AG04449 (cell line): ENCODE measurements at regions of chr10 and their contacts with region 1.

Region 1: DNA sequence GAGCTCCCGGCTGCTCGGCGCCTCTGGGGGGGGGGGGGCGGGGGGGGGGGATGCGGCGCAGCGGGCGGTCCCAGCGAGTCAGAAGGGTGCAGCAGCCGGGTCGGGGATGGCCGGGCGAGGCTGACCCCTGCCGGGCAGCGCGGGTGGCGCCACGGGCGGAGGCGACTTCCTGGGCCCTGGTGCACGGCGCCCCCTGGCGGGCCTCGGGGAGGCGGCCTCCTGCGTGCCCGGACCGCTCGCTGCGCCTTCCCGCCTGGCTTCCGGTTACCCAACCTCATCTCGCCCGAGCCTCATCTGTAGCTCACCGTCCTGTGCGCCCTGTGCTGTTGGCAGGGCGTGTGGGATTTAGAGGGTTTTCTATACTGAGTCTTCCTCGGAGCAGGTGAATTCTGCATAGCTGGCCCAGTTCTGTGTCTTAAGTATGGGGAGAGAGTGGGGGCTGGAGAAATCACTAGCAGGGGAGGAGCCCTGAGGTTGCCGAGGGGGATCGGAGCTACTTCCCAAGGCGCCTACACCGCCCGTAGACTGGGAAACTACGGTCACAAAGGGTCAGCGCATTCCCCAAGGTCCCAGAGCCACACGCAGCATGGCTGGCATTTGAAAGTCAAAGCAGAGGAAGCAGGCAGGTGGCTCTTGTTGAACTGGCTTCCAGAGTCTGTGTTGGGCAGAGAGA is 28.3 kb upstream of the WDFY4 start:
- DNase-seq: no peak
- H3K4me3 ChIP-seq: peak overlapping the region; percentile 62
- CTCF ChIP-seq: peak; percentile 100

Region 2: DNA sequence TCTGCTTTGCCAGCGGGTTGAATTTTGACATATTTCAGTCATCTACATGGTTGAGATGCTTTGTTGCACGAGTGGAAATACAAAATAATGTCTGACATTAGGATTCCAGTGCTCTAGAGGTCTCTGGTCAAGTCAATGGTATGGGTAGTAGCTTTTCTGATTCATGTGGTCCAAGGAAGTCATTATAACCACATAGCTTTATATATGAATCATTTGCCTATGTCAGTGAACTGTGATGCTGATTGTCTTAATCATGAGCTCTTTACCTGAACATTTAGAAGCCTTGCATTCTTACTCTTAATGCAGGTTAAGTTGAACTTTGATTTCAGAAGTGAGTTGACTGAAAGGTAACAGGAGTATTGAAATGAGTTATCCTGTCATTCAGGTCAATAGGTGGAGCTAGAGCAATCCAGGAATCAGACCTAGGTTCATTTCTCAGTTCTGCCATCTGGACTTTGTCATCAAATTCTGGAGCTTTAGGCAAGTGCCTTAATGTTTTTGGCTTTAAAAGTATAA is 346.6 kb before region 1 on chr10:
- CTCF ChIA-PET with region 1: interaction called, 14 read pairs
- POLR2A ChIA-PET with region 1: no interaction called
- DNase-seq: no peak
- H3K4me3 ChIP-seq: no peak overlapping the region
- CTCF ChIP-seq: no peak

Region 3: GRCh38 chr10:48414778-48415177 is 241.6 kb before region 1 on chr10:
- CTCF ChIA-PET with region 1: interaction called, 13 read pairs
- POLR2A ChIA-PET with region 1: no interaction called
- DNase-seq: no peak
- H3K4me3 ChIP-seq: no peak overlapping the region
- CTCF ChIP-seq: no peak

Region 4: DNA sequence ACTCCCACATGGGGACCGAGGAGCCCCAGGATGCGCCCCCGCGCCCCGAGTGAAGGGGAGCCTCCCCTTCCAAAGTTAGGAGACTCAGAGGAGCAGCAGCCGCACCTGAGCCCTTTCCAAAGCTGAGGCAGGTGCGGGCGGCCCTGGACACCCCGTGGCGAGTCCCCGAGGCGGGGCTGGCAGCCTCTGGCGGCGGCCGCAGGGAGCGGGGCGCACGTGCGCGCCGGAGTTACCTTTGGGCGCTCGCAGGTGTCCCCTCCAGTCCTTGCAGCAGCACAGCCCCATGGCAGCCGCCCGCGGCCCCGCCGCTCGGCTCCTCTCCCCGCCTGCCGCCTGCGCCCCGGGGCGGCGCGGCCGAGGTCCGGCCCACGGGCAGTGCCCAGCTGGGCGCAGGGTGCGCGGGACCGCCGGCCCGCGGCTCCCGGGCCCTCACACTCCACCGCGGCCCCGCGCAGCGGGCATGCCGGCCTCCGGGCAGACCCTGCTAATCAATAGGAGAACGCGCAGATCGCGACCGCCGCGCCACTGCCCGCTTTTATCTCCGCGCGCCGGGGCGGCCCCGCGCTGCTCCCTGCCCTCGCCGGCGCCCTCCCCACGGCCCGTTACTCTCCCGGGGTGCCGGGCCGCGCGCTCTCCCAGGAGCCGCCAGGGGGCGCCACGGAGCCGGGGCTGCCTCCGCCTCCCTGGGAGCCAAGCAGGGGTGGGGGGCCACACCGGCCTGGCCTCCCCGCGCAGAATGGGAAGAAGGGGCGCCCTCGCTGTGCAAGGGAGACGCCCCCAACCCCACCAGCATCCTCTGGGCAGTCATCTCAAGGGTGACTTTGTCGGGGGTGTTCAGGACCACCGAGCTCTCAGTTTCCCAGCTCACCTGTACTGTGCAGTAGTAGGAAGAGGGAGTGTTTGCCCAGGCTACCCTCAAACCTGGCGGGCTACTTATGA is 132.3 kb before region 1 on chr10:
- CTCF ChIA-PET with region 1: interaction called, 107 read pairs
- POLR2A ChIA-PET with region 1: interaction called, 3 read pairs
- DNase-seq: no peak
- H3K4me3 ChIP-seq: peak overlapping the region; percentile 57
- CTCF ChIP-seq: peak; percentile 48

Region 5: DNA sequence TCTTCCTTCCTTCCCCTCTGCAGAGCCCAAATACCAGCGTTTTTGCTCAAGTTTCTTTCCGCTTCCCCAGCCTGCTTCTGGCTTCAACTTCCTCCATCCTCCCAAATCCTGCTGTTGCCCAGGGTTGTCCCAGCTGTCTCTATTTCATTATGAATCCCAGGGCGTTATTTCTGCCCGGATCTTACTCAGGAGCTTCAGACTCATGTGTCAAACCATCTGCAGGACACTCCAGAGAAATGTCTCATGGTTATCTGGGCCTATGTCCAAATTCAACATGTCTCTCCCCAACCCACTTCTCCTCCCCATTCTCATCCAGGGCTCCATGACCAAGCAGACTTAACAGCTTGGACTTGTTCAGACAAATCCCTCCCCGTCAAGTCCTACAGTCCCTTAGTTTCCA is 67.1 kb before region 1 on chr10:
- CTCF ChIA-PET with region 1: interaction called, 65 read pairs
- POLR2A ChIA-PET with region 1: interaction called, 3 read pairs
- DNase-seq: peak; percentile 94
- H3K4me3 ChIP-seq: no peak overlapping the region
- CTCF ChIP-seq: no peak

Region 6: DNA sequence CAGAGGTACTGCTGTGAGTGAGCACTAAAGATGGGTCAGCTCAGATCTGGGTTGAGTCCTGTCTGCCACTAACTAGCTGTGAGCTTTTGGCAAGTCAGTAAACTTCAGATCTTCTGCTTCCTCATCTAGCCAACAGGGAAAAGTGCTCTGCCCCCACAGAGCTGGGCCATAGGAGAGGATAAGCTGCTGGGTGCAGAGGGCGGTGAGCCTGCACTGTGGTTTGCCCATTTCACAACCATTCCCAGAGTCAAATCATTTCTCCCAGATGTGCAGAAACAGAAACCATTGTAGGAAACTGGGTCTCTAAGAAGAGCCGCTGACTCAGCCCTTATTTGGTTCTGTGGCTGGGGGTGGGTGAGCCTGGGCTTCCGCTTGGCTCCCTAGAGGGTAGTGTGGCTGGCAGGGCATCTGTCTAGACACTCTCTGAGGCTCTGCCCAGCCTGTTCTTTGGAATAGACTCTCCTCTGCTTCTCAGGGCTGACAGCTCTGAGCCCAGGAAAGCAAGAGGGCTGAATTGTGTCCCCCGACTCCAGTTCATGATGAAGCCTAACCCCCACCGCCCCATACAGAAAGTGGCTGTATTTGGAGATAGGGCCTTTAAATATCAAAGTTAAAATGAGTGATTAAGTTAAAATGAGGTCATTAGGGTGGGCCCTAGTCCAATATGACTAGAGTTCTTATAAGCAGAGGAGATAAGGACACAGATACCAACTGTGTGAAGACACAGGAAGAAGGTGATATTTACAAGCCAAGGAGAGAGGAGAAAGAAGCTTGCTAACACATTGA is 22.0 kb before region 1 on chr10:
- CTCF ChIA-PET with region 1: interaction called, 132 read pairs
- POLR2A ChIA-PET with region 1: interaction called, 3 read pairs
- DNase-seq: peak; percentile 49
- H3K4me3 ChIP-seq: no peak overlapping the region
- CTCF ChIP-seq: no peak

Region 7: DNA sequence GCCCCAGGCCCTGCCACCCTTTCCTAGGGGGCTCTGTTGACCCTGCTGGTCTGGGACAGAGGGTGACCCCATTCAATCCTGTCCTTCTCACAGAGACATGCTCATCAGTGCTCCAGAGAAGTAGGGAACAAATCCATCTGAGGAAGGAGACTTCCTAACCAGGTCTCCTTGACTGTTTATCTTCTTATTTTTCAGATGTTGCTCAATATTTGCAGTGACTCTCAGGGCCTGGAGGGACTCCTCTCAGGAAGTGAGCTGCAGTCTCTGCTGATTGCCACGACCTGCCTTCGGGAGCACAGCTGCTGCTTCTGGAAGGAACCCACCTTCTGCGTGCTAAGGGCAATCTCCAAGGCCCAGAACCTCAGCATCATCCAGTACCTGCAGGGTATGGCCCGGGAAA is 69.3 kb after region 1 on chr10:
- CTCF ChIA-PET with region 1: no interaction called
- POLR2A ChIA-PET with region 1: no interaction called
- DNase-seq: no peak
- H3K4me3 ChIP-seq: no peak overlapping the region
- CTCF ChIP-seq: no peak

Region 8: DNA sequence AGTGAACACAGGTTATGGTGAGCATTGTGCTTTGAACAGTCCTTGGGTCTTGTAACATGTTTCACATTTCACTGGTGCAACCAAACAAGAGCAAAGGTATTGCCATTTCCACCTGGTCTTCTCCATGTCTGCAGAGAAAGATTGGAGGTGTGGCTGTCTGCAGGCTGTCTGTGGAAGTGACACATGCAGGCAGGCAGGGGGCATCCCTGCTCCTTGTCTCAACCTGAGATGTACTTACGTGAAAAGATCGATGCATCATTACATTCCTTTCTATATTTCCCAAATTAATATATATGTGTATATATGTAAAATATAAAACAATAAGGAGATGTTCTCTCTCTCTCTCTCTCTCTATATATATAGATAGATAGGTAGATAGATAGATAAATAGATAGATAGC is 229.0 kb after region 1 on chr10:
- CTCF ChIA-PET with region 1: no interaction called
- POLR2A ChIA-PET with region 1: no interaction called
- DNase-seq: no peak
- H3K4me3 ChIP-seq: no peak overlapping the region
- CTCF ChIP-seq: peak; percentile 9

Region 9: GRCh38 chr10:49512121-49512809 is 855.9 kb after region 1 on chr10:
- CTCF ChIA-PET with region 1: interaction called, 111 read pairs
- POLR2A ChIA-PET with region 1: no interaction called
- DNase-seq: no peak
- H3K4me3 ChIP-seq: no peak overlapping the region
- CTCF ChIP-seq: peak; percentile 55